Common myeloid progenitor, CD34-positive (primary cell): ENCODE measurements at regions of chr1 and their contacts with region 1.

Region 1: GRCh38 chr1:19353596-19353995 is 41.5 kb downstream of the SLC66A1 start:
- DNase-seq: no peak
- H3K4me3 ChIP-seq: no peak overlapping the region
- H3K27ac ChIP-seq: no peak overlapping the region
- H3K4me1 ChIP-seq: peaks cover 0 to 6% (median 2%) of the 10 kb centered on the region in 4 experiments
- H3K27me3 ChIP-seq: no peaks in the 10 kb centered on the region

Region 2: GRCh38 chr1:19300211-19300610 is 53.4 kb before region 1 on chr1:
- CTCF ChIA-PET with region 1: no interaction called
- POLR2A ChIA-PET with region 1: no interaction called
- DNase-seq: no peak
- H3K4me3 ChIP-seq: no peak overlapping the region
- H3K27ac ChIP-seq: no peak overlapping the region
- H3K4me1 ChIP-seq: no peaks in the 10 kb centered on the region
- H3K27me3 ChIP-seq: no peaks in the 10 kb centered on the region

Region 3: GRCh38 chr1:19341201-19342072 is 12.2 kb before region 1 on chr1:
- CTCF ChIA-PET with region 1: interaction called, 14 read pairs
- POLR2A ChIA-PET with region 1: no interaction called
- DNase-seq: peak; percentile 63 to 80 (median 70)
- H3K4me3 ChIP-seq: no peak overlapping the region
- H3K27ac ChIP-seq: no peak overlapping the region
- H3K4me1 ChIP-seq: peaks cover 0 to 12% (median 5%) of the 10 kb centered on the region in 4 experiments
- H3K27me3 ChIP-seq: no peaks in the 10 kb centered on the region